Caco-2 (cell line): ENCODE measurements at regions of chr14 and their contacts with region 1.

Region 1: GRCh38 chr14:36105401-36105800 is 71.1 kb downstream of the PTCSC3 start:
- DNase-seq: peak; percentile 41 to 51
- H3K4me3 ChIP-seq: no peak overlapping the region
- H3K4me3 Mint-ChIP-seq: no peak overlapping the region
- H3K27ac Mint-ChIP-seq: no peak overlapping the region
- H3K4me1 ChIP-seq: no peaks in the 10 kb centered on the region
- H3K4me1 Mint-ChIP-seq: no peaks in the 10 kb centered on the region
- H3K27me3 ChIP-seq: no peaks in the 10 kb centered on the region
- H3K27me3 Mint-ChIP-seq: peaks cover 14% of the 10 kb centered on the region
- CTCF ChIP-seq: peak; percentile 20 to 32

Region 2: DNA sequence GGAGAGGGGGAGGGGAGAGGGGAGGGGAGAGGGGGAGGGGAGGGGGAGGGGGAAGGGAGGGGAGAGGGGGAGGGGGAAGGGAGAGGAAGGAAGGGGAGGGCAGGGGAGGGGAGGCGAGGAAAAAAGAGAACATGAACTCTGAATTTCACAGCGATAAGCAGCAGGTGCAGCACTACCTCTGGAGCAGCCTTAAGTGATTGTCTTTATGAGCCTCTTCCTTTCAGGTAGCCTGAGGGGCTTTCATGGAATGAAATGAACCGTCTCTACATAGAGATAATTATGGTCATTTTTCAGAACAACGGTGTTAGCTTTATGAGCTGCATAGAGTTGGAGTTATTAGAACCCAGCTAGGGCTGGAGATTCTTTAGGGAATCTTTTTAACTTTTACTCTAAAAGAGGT is 89.3 kb after region 1 on chr14:
- CTCF ChIA-PET with region 1: no interaction called
- POLR2A ChIA-PET with region 1: no interaction called
- intact Hi-C with region 1: no loop called
- DNase-seq: no peak
- H3K4me3 ChIP-seq: no peak overlapping the region
- H3K4me3 Mint-ChIP-seq: no peak overlapping the region
- H3K27ac Mint-ChIP-seq: no peak overlapping the region
- H3K4me1 ChIP-seq: no peaks in the 10 kb centered on the region
- H3K4me1 Mint-ChIP-seq: no peaks in the 10 kb centered on the region
- H3K27me3 ChIP-seq: no peaks in the 10 kb centered on the region
- H3K27me3 Mint-ChIP-seq: peaks cover 29% of the 10 kb centered on the region
- CTCF ChIP-seq: no peak

Region 3: DNA sequence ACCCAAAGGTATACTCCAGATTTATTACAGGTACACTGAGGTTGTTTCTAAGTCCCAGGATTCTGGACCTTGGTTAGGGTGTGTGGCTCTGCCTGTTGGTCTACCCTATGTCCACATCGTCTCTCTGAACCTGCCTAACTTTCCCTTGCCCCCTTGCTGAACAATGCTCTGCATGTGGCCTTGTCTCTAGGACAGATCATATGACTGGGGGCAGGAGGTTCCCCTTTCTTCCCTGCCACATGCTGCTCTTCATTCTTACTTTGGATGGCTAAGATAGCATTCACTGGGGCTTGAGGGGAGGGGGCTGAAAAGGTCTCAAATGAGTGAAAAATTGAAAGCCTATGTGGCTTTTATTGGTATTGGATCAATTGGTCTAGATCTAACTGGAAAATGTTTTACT is 165.8 kb after region 1 on chr14:
- CTCF ChIA-PET with region 1: no interaction called
- POLR2A ChIA-PET with region 1: no interaction called
- intact Hi-C with region 1: no loop called
- DNase-seq: no peak
- H3K4me3 ChIP-seq: no peak overlapping the region
- H3K4me3 Mint-ChIP-seq: no peak overlapping the region
- H3K27ac Mint-ChIP-seq: no peak overlapping the region
- H3K4me1 ChIP-seq: no peaks in the 10 kb centered on the region
- H3K4me1 Mint-ChIP-seq: no peaks in the 10 kb centered on the region
- H3K27me3 ChIP-seq: no peaks in the 10 kb centered on the region
- H3K27me3 Mint-ChIP-seq: no peaks in the 10 kb centered on the region
- CTCF ChIP-seq: no peak

Region 4: DNA sequence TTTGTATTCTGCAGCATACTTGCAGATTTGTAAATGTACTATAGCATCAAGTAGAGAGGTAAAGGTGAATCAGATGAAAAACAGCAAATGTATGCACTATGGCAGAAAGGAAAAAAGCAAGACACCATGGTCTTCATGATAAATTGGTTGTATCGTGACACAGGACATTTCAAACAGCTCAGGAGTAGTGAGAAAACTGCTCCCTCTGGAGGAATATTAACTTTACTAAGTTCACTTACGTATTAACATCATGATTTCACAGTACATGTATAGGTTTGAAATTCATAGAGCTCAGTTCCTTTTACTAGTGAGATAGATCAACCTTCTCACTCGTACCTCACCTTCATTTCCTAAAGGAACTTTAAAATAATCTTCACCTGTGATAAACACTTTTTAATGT is 208.5 kb after region 1 on chr14:
- CTCF ChIA-PET with region 1: interaction called, 3 read pairs
- POLR2A ChIA-PET with region 1: no interaction called
- intact Hi-C with region 1: loop called (anchors 1 kb)
- DNase-seq: no peak
- H3K4me3 ChIP-seq: no peak overlapping the region
- H3K4me3 Mint-ChIP-seq: no peak overlapping the region
- H3K27ac Mint-ChIP-seq: no peak overlapping the region
- H3K4me1 ChIP-seq: no peaks in the 10 kb centered on the region; the same call in 1 of the 2 replicates
- H3K4me1 Mint-ChIP-seq: no peaks in the 10 kb centered on the region
- H3K27me3 ChIP-seq: no peaks in the 10 kb centered on the region
- H3K27me3 Mint-ChIP-seq: no peaks in the 10 kb centered on the region
- CTCF ChIP-seq: peak; percentile 29 to 30

Region 5: DNA sequence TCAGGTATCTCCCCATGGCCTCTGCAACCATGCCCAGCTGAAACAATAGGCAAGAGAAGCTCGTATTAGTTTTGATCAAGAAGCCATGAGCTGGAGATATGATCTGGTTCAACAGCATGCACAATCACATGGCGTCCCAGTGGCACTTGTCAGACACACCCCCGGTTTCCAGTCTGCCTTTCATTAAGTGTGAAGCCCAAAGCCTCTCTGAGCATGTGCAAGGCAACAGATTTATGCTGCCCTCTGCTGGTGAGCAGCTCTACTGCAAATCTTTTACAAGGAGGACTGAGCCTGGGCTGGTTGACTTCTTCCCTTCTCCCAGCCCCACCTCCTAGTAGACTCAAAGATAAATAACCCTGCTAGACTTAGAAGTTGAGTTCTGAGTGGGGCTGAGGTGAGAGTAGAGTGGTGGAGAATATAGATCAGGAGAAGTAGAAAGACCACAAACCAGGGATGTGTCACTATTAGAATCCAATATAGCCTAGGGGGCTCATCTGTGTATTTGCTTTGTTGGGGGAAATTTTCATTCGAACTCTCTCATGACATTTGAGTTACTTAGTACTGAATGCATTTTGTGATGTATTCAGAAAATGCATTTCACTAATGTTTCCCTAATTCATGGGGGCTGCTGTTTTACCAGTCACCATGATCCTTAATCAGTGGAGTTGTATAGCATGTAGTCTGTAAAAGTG is 268.7 kb after region 1 on chr14:
- CTCF ChIA-PET with region 1: no interaction called
- POLR2A ChIA-PET with region 1: no interaction called
- intact Hi-C with region 1: loop called (anchors 1 kb)
- DNase-seq: peak; percentile 84 to 86
- H3K4me3 ChIP-seq: no peak overlapping the region
- H3K4me3 Mint-ChIP-seq: no peak overlapping the region
- H3K27ac Mint-ChIP-seq: no peak overlapping the region
- H3K4me1 ChIP-seq: no peaks in the 10 kb centered on the region
- H3K4me1 Mint-ChIP-seq: peaks cover 6% of the 10 kb centered on the region
- H3K27me3 ChIP-seq: no peaks in the 10 kb centered on the region
- H3K27me3 Mint-ChIP-seq: peaks cover 3% of the 10 kb centered on the region
- CTCF ChIP-seq: peak; percentile 85 to 90

Region 6: GRCh38 chr14:36520601-36521525 is 415.5 kb after region 1 on chr14:
- CTCF ChIA-PET with region 1: interaction called, 7 read pairs
- POLR2A ChIA-PET with region 1: no interaction called
- intact Hi-C with region 1: loop called (anchors 10 kb)
- DNase-seq: peak; percentile 73 to 81
- H3K4me3 ChIP-seq: peak overlapping the region; percentile 41
- H3K4me3 Mint-ChIP-seq: peak overlapping the region; percentile 76
- H3K27ac Mint-ChIP-seq: no peak overlapping the region
- H3K4me1 ChIP-seq: peaks cover 3% of the 10 kb centered on the region; the same call in 1 of the 2 replicates
- H3K4me1 Mint-ChIP-seq: no peaks in the 10 kb centered on the region
- H3K27me3 ChIP-seq: no peaks in the 10 kb centered on the region; the same call in 1 of the 2 replicates
- H3K27me3 Mint-ChIP-seq: peaks cover 5% of the 10 kb centered on the region
- CTCF ChIP-seq: peak in 1 of 2 experiments; percentile 77

Region 7: GRCh38 chr14:36553656-36554260 is 448.4 kb after region 1 on chr14:
- CTCF ChIA-PET with region 1: interaction called, 5 read pairs
- POLR2A ChIA-PET with region 1: no interaction called
- intact Hi-C with region 1: loop called (anchors 10 kb)
- DNase-seq: peak in 1 of 2 experiments; percentile 48
- H3K4me3 ChIP-seq: no peak overlapping the region
- H3K4me3 Mint-ChIP-seq: no peak overlapping the region
- H3K27ac Mint-ChIP-seq: no peak overlapping the region
- H3K4me1 ChIP-seq: no peaks in the 10 kb centered on the region
- H3K4me1 Mint-ChIP-seq: no peaks in the 10 kb centered on the region
- H3K27me3 ChIP-seq: no peaks in the 10 kb centered on the region
- H3K27me3 Mint-ChIP-seq: no peaks in the 10 kb centered on the region
- CTCF ChIP-seq: peak; percentile 65 to 80